ENCODE measurements at regions of chr9 and their contacts with region 1.

Region 1: GRCh38 chr9:114587385-114588202 is at the start of gene ATP6V1G1:
- DNase-seq: peak; percentile 99 to 100 (median 100)
- ATAC-seq: peak; percentile 97
- H3K4me3 ChIP-seq: peak within 1 kb of the TSS; percentile 95
- H3K4me1 ChIP-seq: peaks cover 42% of the 10 kb centered on the region
- CTCF ChIP-seq: no peak
- total RNA-seq, gene ATP6V1G1: 55.3 to 74.5 (median 69.9) TPM

Region 2: DNA sequence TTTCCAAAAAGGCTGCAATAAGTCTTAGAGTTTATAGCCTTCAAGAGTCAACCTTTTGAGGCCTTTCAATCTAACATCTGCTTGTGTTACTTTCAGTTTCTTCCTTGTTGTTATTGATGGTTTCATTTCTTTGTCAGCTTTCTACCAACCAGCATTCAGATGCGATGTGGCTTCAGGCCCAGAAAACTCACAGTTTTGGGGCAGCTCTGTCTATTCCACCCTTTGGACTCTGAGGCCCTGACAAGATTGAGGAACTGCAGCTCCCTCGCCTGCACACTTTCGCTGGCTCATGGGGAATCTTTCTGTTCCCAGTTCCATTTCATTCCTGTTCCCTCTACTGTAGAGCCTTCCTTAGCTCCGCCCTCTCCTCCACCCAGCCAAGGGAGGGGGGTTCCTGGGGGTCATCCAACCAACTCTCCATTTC is 69.0 kb before region 1 on chr9:
- intact Hi-C with region 1: loop called in 1 of 2 experiments (anchors 10 kb)
- DNase-seq: peak in 1 of 3 donors; percentile 15
- ATAC-seq: peak; percentile 45
- H3K4me3 ChIP-seq: no peak overlapping the region
- H3K4me1 ChIP-seq: no peaks in the 10 kb centered on the region
- CTCF ChIP-seq: no peak

Region 3: DNA sequence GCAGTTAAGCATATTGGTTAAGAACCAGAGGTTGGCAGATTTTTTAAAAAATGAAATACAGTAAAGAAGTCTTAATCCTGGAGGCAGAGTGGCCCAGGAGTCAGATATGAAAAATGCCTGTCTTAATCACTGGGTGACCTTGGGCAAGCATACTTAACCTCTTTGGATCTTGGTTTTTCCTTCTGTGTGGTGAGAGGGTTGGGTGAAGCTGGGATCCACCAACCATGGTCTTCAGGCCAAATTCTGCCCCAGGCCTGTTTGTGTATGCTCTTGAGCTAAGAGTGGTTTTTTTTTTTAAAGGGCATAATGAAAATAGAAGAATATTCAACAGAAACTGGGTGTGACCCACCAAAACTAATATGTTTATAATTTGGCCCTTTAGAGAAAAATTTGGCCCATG is 114.4 kb after region 1 on chr9:
- intact Hi-C with region 1: no loop called
- DNase-seq: no peak
- ATAC-seq: no peak
- H3K4me3 ChIP-seq: no peak overlapping the region
- H3K4me1 ChIP-seq: no peaks in the 10 kb centered on the region
- CTCF ChIP-seq: no peak